B cell (primary cell): ENCODE measurements at regions of chr11 and their contacts with region 1.

Region 1: GRCh38 chr11:72430741-72431570 is 3.4 kb downstream of the CLPB start:
- DNase-seq: peak; percentile 64
- ATAC-seq: no peak
- H3K4me3 ChIP-seq: no peak overlapping the region
- H3K4me3 Mint-ChIP-seq: no peak overlapping the region
- H3K27ac ChIP-seq: no peak overlapping the region
- H3K27ac Mint-ChIP-seq: peak overlapping the region; percentile 27
- H3K4me1 ChIP-seq: peaks cover 6 to 12% of the 10 kb centered on the region in 2 donors
- H3K4me1 Mint-ChIP-seq: peaks cover 30% of the 10 kb centered on the region
- H3K27me3 ChIP-seq: no peaks in the 10 kb centered on the region
- H3K27me3 Mint-ChIP-seq: no peaks in the 10 kb centered on the region
- CTCF ChIP-seq: peak; percentile 77

Region 2: DNA sequence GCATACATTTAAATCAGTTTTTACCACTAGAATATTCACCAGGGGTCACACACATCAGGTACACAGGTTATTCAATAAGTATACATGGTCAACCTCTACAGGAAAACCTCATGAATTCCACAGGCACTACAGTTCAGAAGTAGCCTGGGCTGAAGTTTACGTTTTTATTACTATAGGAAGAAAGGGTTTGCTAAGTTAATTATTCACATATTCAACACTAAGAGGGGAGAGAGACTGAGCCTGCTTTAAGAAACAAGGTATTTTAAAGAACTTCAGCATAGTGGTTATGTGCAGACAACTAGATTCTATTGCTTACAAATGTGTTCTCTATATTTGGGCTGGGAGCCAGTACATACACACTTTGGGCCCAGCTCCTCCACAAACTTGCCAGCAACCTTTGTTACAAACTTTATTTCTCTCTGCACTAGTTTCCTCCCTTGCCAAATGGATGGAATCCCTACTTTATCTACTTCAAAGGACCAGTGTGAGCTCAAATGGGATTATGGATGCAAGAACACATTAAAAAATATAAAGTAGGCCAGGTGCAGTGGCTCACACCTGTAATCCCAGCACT is 400.4 kb before region 1 on chr11:
- CTCF ChIA-PET with region 1: interaction called, 22 read pairs
- POLR2A ChIA-PET with region 1: no interaction called
- intact Hi-C with region 1: no loop called
- DNase-seq: no peak
- ATAC-seq: no peak
- H3K4me3 ChIP-seq: no peak overlapping the region
- H3K4me3 Mint-ChIP-seq: no peak overlapping the region
- H3K27ac ChIP-seq: peak overlapping the region in 1 of 2 donors; percentile 52
- H3K27ac Mint-ChIP-seq: peak overlapping the region; percentile 11
- H3K4me1 ChIP-seq: peaks cover 0 to 2% of the 10 kb centered on the region in 2 donors
- H3K4me1 Mint-ChIP-seq: peaks cover 35% of the 10 kb centered on the region
- H3K27me3 ChIP-seq: no peaks in the 10 kb centered on the region
- H3K27me3 Mint-ChIP-seq: no peaks in the 10 kb centered on the region
- CTCF ChIP-seq: no peak

Region 3: DNA sequence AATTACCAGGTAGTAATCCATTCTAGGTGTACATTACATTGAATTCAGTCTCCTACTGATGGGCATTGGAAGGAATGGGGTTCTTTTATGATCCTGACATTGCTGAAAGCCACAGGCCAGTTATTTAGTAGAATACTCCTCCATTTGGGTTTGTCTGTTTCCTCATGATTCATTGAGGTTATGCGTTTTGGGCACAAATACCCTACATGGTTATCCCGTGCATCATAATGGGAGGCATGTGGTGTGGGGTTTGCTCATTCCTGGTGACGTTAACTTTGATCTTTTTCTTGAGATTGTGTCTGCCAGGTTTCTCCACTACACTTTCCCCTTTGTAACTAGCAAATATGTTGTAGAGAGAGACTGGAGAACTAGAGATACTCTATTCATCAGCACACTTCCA is 289.9 kb before region 1 on chr11:
- CTCF ChIA-PET with region 1: interaction called, 17 read pairs
- POLR2A ChIA-PET with region 1: no interaction called
- intact Hi-C with region 1: no loop called
- DNase-seq: no peak
- ATAC-seq: no peak
- H3K4me3 ChIP-seq: no peak overlapping the region
- H3K4me3 Mint-ChIP-seq: no peak overlapping the region
- H3K27ac ChIP-seq: no peak overlapping the region
- H3K27ac Mint-ChIP-seq: no peak overlapping the region
- H3K4me1 ChIP-seq: no peaks in the 10 kb centered on the region
- H3K4me1 Mint-ChIP-seq: no peaks in the 10 kb centered on the region
- H3K27me3 ChIP-seq: peaks cover 0 to 3% (median 0%) of the 10 kb centered on the region in 4 experiments
- H3K27me3 Mint-ChIP-seq: peaks cover 19% of the 10 kb centered on the region
- CTCF ChIP-seq: no peak

Region 4: DNA sequence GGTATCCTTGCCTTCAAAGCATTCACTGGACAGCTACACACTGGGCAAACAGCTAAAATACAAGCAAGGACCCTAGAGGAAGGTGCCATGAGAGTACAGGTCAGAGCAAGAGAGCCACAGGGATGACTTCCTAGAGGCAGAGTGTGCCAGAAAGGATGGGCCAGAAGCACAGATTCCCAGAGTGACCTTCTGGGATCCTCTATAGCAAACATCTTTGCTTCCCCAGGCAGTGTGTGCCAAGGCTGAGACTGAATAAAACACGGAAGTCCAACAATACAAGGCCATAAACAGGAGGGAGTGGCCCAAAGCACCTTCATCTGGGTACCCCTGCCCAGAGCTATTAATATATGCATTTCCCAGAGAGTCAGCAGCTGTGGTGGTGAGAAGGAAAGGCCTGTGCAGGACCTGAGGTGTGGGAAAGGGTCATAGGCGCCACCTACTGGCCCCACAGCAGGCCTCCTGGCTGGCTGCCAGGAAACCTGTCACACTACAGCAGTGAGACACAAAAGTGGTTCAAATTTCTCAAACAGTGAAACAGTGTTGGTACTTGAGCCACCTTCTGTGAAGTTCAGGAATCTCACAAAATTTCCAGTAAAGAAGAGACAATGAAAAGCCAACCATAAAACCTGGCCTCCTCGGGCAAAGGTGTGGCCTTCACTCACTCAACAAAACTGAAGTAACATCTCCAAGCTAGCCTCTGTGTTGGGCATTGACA is 16.9 kb before region 1 on chr11:
- CTCF ChIA-PET with region 1: interaction called, 60 read pairs
- POLR2A ChIA-PET with region 1: no interaction called
- intact Hi-C with region 1: loop called (anchors 1 kb)
- DNase-seq: peak; percentile 81
- ATAC-seq: no peak
- H3K4me3 ChIP-seq: no peak overlapping the region
- H3K4me3 Mint-ChIP-seq: no peak overlapping the region
- H3K27ac ChIP-seq: no peak overlapping the region
- H3K27ac Mint-ChIP-seq: peak overlapping the region; percentile 60
- H3K4me1 ChIP-seq: peaks cover 12 to 27% of the 10 kb centered on the region in 2 donors
- H3K4me1 Mint-ChIP-seq: peaks cover 43% of the 10 kb centered on the region
- H3K27me3 ChIP-seq: no peaks in the 10 kb centered on the region
- H3K27me3 Mint-ChIP-seq: no peaks in the 10 kb centered on the region
- CTCF ChIP-seq: peak; percentile 81

Region 5: DNA sequence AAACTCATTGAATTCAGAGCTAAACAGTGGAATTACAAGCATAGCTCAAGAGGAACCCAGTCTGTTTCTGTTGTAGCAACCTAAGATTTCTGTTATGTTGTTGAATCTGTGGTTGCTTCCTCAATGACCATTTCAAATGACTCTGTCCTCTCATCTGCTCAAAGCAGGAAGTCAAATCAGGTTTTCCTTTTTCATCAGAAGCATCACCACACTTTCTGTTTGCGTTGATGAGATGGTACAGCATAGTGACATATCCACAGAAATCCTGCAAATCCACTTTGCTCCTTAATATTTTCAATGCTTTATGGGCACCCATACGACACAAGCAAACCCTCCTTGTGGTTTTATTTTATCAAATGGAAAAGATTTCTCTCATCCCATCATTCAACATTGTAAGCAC is 1564.3 kb after region 1 on chr11:
- CTCF ChIA-PET with region 1: no interaction called
- POLR2A ChIA-PET with region 1: no interaction called
- intact Hi-C with region 1: loop called (anchors 10 kb)
- DNase-seq: peak; percentile 87
- ATAC-seq: peak; percentile 60
- H3K4me3 ChIP-seq: peak overlapping the region in 2 of 5 experiments; percentile 8 to 32
- H3K4me3 Mint-ChIP-seq: peak overlapping the region; percentile 77
- H3K27ac ChIP-seq: peak overlapping the region; percentile 83 to 98
- H3K27ac Mint-ChIP-seq: peak overlapping the region; percentile 100
- H3K4me1 ChIP-seq: peaks cover 91 to 92% of the 10 kb centered on the region in 2 donors
- H3K4me1 Mint-ChIP-seq: peaks cover 85% of the 10 kb centered on the region
- H3K27me3 ChIP-seq: no peaks in the 10 kb centered on the region
- H3K27me3 Mint-ChIP-seq: no peaks in the 10 kb centered on the region
- CTCF ChIP-seq: no peak